G401 (cell line): ENCODE measurements at regions of chr20 and their contacts with region 1.

Region 1: GRCh38 chr20:4006640-4007039 is 8.7 kb downstream of the RNF24 start:
- DNase-seq: peak; percentile 99

Region 2: DNA sequence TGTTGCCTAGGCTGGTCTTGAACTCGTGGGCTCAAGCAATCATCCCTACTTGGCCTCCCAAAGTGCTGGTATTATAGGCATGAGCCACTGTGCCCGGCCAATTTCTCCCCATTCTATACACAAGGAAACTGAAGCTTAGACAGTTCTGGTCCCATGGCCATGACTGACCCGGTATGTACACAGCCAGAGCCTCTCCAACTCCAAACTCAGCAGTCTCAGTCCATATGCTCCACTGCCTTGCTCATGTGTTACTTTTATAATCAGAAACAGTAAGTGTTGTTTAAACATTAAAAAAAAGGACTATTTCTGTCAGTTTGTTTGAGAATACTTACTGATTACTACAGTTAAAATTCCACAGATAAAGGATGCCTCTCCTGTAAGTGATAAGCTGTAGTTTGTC is 41.9 kb before region 1 on chr20:
- in situ Hi-C with region 1: loop called (anchors 5 kb)
- DNase-seq: no peak